ENCODE measurements at regions of chr7 and their contacts with region 1.

Region 1: DNA sequence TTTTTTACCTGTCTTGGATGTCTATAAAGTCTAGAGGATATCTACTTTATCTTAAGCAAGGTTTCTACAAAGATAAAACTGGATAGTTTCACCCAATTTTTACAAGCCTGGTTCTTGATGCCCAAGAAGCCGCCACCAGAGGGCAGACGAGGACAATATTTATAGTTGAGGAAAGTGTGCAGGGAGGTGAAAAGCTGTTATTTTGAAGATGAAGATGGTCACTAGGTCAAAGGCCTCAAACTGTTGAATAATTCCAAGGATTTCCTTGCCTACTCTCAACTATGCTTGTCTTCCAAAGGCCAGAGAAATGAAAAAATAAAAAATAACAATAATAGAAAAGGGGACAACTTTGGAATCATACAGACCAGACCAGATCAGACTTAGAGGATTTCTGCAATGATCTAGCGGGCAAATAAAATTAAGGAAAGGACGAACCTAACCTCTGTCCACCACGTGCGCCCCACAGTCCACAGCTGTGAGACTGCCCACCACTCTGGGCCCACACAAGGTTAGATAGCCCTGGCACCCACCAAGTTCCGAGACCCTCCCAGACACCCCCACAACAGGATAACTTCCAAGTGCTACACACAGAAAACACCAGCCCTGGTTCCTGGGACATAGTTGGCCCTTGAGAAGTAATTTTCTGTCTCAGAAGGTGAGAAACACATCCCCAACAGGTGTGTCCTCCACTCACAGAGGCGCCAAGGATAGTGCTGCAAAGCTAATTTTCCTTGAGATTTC is 2.8 kb downstream of the PKD1L1 start:
- DNase-seq: peak; percentile 91
- H3K4me3 Mint-ChIP-seq: no peak overlapping the region
- H3K27ac Mint-ChIP-seq: no peak overlapping the region
- H3K4me1 Mint-ChIP-seq: peaks cover 2% of the 10 kb centered on the region
- H3K27me3 Mint-ChIP-seq: no peaks in the 10 kb centered on the region

Region 2: GRCh38 chr7:47968847-47969774 is 23.7 kb after region 1 on chr7:
- intact Hi-C with region 1: no loop called
- DNase-seq: peak; percentile 84
- H3K4me3 Mint-ChIP-seq: no peak overlapping the region
- H3K27ac Mint-ChIP-seq: peak overlapping the region; percentile 19
- H3K4me1 Mint-ChIP-seq: peaks cover 15% of the 10 kb centered on the region
- H3K27me3 Mint-ChIP-seq: no peaks in the 10 kb centered on the region

Region 3: GRCh38 chr7:48154792-48155413 is 209.5 kb after region 1 on chr7:
- intact Hi-C with region 1: loop called (anchors 1 kb)
- DNase-seq: peak; percentile 80
- H3K4me3 Mint-ChIP-seq: no peak overlapping the region
- H3K27ac Mint-ChIP-seq: no peak overlapping the region
- H3K4me1 Mint-ChIP-seq: no peaks in the 10 kb centered on the region
- H3K27me3 Mint-ChIP-seq: peaks cover 21% of the 10 kb centered on the region

Measured in activated CD4-positive, alpha-beta T cell treated with anti-CD3 and anti-CD28 coated beads, Interleukin-2, amount 10 ng/mL, durations not matched to agents 24 days and 14 days (primary cell).